Dendritic cell treated with granulocyte-macrophage colony-stimulating factor and Interleukin-4, amounts not matched to agents 40 ng/mL and 50 ng/mL, for 4 days (primary cell): ENCODE measurements at regions of chr11 and their contacts with region 1.

Region 1: DNA sequence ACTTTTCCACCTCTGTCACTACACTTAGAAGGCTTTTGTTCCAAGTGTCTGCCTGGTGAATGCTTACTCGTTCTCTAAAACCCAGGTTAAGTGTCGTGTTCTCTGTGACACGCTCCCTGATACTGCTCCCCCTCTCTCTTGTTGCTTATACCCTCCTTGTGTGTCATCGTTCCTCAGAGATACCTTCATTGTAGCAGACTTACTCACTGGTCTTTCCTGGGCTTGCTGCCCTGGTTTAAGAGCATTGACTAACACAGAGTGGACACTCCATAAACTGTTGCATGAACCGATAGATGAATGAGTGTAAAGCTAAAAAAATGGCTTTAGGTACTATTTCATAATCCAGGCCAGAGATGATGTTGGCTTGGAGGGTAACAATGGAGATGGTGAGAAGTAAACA is 171.3 kb downstream of the GRIK4 start:
- H3K4me3 Mint-ChIP-seq: no peak overlapping the region
- H3K27ac Mint-ChIP-seq: no peak overlapping the region
- H3K4me1 Mint-ChIP-seq: peaks cover under 1% of the 10 kb centered on the region
- H3K27me3 Mint-ChIP-seq: peaks cover 43% of the 10 kb centered on the region

Region 2: DNA sequence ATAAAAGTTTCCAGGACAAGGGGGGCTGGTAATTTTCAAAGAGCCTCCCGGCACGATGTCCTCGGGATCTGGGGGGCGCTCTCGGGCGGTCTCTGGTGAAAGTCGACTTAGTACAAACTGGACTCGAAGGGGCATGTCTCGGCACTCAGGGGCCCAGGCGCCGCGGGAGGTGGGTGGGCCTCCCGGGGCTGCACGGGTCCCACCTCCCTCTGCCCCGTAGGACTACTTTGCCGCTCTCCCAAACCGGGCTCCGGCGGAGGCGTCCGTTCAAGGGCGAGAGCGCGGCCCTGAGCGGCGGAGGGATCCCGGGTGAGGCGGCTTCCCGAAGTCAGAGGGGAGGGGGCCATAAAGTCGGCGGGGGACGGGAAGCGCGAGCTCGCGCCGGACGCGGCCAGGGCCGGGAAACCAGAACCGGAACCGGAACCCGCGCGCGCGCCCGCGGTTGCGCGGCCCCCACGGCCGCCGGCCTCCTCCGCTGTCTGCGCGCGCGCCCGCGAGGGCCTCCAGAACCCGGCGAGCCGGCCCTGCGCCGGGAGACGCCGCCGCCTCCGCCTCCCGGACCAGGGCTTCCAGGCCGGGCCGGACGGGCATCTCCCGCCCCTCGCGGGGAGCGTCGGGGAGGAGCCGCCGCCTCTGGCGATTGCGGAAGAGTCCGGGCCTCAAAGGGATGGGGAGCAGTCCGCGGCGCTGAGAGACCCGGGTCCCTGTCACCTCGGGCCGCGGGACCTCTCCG is 346.8 kb before region 1 on chr11 and contains the start of gene ARHGEF12:
- intact Hi-C with region 1: loop called (anchors 2 kb)
- H3K4me3 Mint-ChIP-seq: peak within 1 kb of the TSS; percentile 86
- H3K27ac Mint-ChIP-seq: peak within 1 kb of the TSS; percentile 67
- H3K4me1 Mint-ChIP-seq: peaks cover 21% of the 10 kb centered on the region
- H3K27me3 Mint-ChIP-seq: peaks cover 75% of the 10 kb centered on the region